Tibial artery (tissue), 4 donors: ENCODE measurements at regions of chr15 and their contacts with region 1.

Region 1: DNA sequence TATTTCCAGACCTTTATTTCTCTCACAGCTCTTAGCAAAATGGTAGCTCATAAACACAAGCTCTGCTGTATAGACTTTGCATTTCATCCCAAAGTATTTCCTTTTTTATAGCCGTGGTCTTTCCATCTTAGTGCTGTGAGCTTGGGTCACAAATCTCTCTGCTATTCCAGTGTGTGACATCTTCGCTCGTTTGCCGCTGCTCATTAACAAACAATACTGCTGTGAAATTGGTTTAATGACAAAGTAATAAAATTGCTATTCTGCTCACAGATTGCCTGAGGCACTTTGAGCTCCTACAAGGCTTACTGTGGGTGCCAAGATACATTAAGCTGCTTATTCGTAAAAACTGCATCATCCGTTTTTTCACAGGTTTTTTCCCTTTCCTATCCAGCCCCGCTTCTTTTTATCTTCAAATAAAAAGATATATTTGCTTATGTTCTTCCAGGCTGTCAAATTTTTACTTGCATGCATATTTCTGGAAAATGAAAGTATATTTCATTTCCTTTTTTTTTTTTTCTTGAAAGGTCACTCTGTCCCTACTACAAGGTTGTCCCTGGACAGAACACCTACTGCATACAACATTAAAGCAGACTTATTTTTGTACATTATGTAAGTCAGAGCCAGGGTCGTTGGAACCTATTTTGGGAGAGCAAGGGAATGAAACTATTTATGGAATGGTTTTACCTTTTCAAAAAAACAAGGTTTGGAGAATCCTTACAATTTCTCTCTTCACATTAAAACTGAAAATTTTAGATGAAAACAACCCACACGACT is 174.5 kb downstream of the MEIS2 start:
- DNase-seq: no peak
- H3K4me3 ChIP-seq: no peak overlapping the region
- H3K27ac ChIP-seq: no peak overlapping the region
- H3K4me1 ChIP-seq: no peaks in the 10 kb centered on the region
- H3K27me3 ChIP-seq: no peaks in the 10 kb centered on the region
- CTCF ChIP-seq: no peak

Region 2: DNA sequence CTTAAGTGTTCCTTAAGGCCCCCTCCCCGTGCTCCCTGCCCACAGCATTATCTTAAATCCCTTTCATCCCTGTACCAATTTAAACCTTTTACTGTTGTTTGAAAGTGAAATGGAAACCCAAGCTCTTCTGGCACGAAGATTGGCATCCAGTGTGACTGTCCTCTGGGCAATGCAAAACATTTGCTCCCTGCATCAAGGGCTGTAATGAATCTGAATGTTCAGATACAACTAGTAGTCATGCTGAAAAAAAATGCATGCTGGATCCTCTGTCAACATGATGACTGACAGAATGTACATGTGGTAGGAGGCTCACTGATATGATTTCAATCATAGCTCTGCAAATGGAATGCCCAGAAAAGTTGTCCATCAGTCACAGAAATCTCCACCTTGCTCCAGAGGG is 354.5 kb before region 1 on chr15:
- intact Hi-C with region 1: no loop called
- DNase-seq: no peak
- H3K4me3 ChIP-seq: no peak overlapping the region
- H3K27ac ChIP-seq: no peak overlapping the region
- H3K4me1 ChIP-seq: peaks cover 0 to 15% (median 4%) of the 10 kb centered on the region in 4 donors
- H3K27me3 ChIP-seq: no peaks in the 10 kb centered on the region
- CTCF ChIP-seq: no peak

Region 3: GRCh38 chr15:36682101-36682500 is 243.7 kb before region 1 on chr15:
- intact Hi-C with region 1: no loop called
- DNase-seq: no peak
- H3K4me3 ChIP-seq: no peak overlapping the region
- H3K27ac ChIP-seq: no peak overlapping the region
- H3K4me1 ChIP-seq: no peaks in the 10 kb centered on the region
- H3K27me3 ChIP-seq: no peaks in the 10 kb centered on the region
- CTCF ChIP-seq: no peak

Region 4: GRCh38 chr15:36961956-36962355 is 36.1 kb after region 1 on chr15:
- intact Hi-C with region 1: loop called (anchors 2 kb)
- DNase-seq: no peak
- H3K4me3 ChIP-seq: no peak overlapping the region
- H3K27ac ChIP-seq: no peak overlapping the region
- H3K4me1 ChIP-seq: peaks cover 0 to 14% (median 0%) of the 10 kb centered on the region in 4 donors
- H3K27me3 ChIP-seq: no peaks in the 10 kb centered on the region
- CTCF ChIP-seq: no peak

Region 5: DNA sequence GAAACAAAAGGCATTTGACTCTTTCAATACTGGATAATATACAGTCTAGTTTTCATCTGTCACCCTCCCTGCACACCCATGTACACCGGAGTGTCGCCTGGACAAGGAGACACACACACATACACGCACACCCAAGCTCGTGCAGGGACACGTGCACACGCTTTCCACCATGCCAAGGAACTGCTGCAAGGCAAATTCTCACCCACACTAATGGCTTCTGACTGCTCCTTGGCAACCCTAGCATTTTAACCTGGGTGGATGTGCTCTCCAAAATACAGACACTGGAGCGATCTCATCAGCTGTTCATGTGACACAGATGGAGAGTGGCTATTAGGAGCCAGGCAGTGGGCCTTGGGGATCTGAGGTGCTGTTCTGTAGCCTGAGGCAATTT is 112.9 kb after region 1 on chr15:
- intact Hi-C with region 1: no loop called
- DNase-seq: no peak
- H3K4me3 ChIP-seq: no peak overlapping the region
- H3K27ac ChIP-seq: no peak overlapping the region
- H3K4me1 ChIP-seq: no peaks in the 10 kb centered on the region
- H3K27me3 ChIP-seq: no peaks in the 10 kb centered on the region
- CTCF ChIP-seq: no peak

Region 6: GRCh38 chr15:37229855-37230619 is 304.2 kb after region 1 on chr15:
- intact Hi-C with region 1: no loop called
- DNase-seq: no peak
- H3K4me3 ChIP-seq: no peak overlapping the region
- H3K27ac ChIP-seq: no peak overlapping the region
- H3K4me1 ChIP-seq: no peaks in the 10 kb centered on the region
- H3K27me3 ChIP-seq: no peaks in the 10 kb centered on the region
- CTCF ChIP-seq: no peak